IMR-90 (cell line): ENCODE measurements at regions of chr7 and their contacts with region 1.

Region 1: DNA sequence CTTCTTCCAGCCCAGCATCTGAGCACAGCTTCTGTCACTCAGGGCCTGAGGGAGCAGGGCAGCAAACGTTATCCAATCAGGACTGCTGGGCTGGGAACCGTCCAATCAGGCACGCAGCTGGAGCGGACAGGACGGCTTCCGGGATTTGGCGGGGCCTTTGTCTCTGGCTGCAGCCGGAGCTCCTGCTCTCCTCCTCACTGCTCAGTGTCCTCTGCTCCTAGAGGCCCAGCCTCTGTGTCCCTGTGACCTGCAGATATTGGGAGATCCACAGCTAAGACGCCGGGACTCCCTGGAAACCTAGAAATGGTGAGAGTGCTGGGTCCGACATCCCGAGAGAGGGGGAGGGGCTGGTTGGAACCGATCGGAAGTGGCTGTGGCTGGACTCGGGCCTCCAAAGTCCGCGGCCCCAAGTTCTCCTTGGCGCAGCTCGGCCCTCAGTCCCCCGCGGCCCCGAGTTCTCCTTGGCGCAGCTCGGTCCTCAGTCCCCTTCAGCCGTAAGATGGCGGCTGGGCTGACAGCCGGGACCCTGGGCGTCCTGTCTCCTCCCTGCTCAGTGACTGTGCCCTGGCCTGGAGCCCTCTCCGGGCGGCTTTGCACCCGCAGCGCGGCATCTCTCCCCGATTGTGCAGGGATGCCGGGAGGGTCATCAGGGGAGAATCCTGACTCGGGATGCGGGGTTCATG is at the start of gene ZNF107:
- DNase-seq: peak; percentile 93
- ATAC-seq: peak; percentile 99
- H3K4me3 ChIP-seq: peak within 1 kb of the TSS; percentile 99
- H3K27ac ChIP-seq: peak within 1 kb of the TSS; percentile 82
- H3K4me1 ChIP-seq: no peaks in the 10 kb centered on the region; the same call in 1 of the 2 replicates
- H3K27me3 ChIP-seq: no peaks in the 10 kb centered on the region
- CTCF ChIP-seq: no peak
- POLR2A ChIP-seq: peak; percentile 55; the same call in 1 of the 2 replicates
- RAD21 ChIP-seq: no peak
- total RNA-seq, gene ZNF107: 2.0 and 3.6 TPM in 2 replicates

Region 2: DNA sequence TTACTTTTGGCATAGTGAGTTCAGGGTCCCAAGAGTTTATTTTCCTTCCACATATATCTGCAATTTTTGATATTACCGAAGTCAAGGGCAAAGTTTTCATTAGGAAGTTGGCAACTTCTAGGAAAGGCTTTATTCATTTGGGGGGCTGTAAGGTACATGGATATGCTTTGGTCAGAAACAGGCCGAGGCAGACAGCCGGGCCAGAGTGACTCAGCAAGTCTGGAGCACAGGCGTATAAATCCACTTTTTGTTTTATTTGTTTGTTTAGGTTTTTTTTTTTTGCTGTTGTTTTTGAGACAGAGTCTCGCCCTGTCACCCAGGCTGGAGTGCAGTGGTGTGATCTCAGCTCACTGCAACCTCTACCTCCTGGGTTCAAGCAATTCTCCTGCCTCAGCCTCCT is 106.9 kb before region 1 on chr7:
- CTCF ChIA-PET with region 1: no interaction called
- POLR2A ChIA-PET with region 1: no interaction called
- dilution Hi-C with region 1: no loop called
- in situ Hi-C with region 1: no loop called
- intact Hi-C with region 1: loop called (anchors 10 kb)
- DNase-seq: no peak
- ATAC-seq: no peak
- H3K4me3 ChIP-seq: no peak overlapping the region
- H3K27ac ChIP-seq: no peak overlapping the region
- H3K4me1 ChIP-seq: peaks cover 2% of the 10 kb centered on the region; the same call in 1 of the 2 replicates
- H3K27me3 ChIP-seq: no peaks in the 10 kb centered on the region
- CTCF ChIP-seq: no peak
- POLR2A ChIP-seq: no peak
- RAD21 ChIP-seq: no peak

Region 3: GRCh38 chr7:64581926-64582894 is 83.9 kb before region 1 on chr7:
- CTCF ChIA-PET with region 1: no interaction called
- POLR2A ChIA-PET with region 1: interaction called, 20 read pairs
- dilution Hi-C with region 1: no loop called
- in situ Hi-C with region 1: no loop called
- intact Hi-C with region 1: no loop called
- DNase-seq: peak; percentile 58
- ATAC-seq: peak; percentile 54
- H3K4me3 ChIP-seq: no peak overlapping the region
- H3K27ac ChIP-seq: no peak overlapping the region
- H3K4me1 ChIP-seq: no peaks in the 10 kb centered on the region
- H3K27me3 ChIP-seq: no peaks in the 10 kb centered on the region
- CTCF ChIP-seq: no peak
- POLR2A ChIP-seq: no peak
- RAD21 ChIP-seq: no peak

Region 4: GRCh38 chr7:64794171-64794844 is 128.2 kb after region 1 on chr7 and contains the start of gene ZNF138:
- CTCF ChIA-PET with region 1: no interaction called
- POLR2A ChIA-PET with region 1: no interaction called
- dilution Hi-C with region 1: no loop called
- in situ Hi-C with region 1: no loop called
- intact Hi-C with region 1: loop called (anchors 5 kb)
- DNase-seq: peak; percentile 91
- ATAC-seq: peak; percentile 100
- H3K4me3 ChIP-seq: peak within 1 kb of the TSS; percentile 90
- H3K27ac ChIP-seq: peak within 1 kb of the TSS; percentile 83
- H3K4me1 ChIP-seq: no peaks in the 10 kb centered on the region
- H3K27me3 ChIP-seq: no peaks in the 10 kb centered on the region
- CTCF ChIP-seq: no peak
- POLR2A ChIP-seq: peak; percentile 47; the same call in 1 of the 2 replicates
- RAD21 ChIP-seq: no peak
- total RNA-seq, gene ZNF138: 3.6 and 6.1 TPM in 2 replicates